Activated CD4-positive, alpha-beta T cell treated with anti-CD3 and anti-CD28 coated beads for 36 hours (primary cell): ENCODE measurements at regions of chr1 and their contacts with region 1.

Region 1: GRCh38 chr1:232248276-232248820 is 381.6 kb downstream of the SIPA1L2 start:
- DNase-seq: no peak
- ATAC-seq: no peak
- H3K4me3 Mint-ChIP-seq: no peak overlapping the region
- H3K27ac Mint-ChIP-seq: no peak overlapping the region
- H3K4me1 Mint-ChIP-seq: peaks cover 4% of the 10 kb centered on the region
- H3K27me3 Mint-ChIP-seq: peaks cover 34% of the 10 kb centered on the region

Region 2: DNA sequence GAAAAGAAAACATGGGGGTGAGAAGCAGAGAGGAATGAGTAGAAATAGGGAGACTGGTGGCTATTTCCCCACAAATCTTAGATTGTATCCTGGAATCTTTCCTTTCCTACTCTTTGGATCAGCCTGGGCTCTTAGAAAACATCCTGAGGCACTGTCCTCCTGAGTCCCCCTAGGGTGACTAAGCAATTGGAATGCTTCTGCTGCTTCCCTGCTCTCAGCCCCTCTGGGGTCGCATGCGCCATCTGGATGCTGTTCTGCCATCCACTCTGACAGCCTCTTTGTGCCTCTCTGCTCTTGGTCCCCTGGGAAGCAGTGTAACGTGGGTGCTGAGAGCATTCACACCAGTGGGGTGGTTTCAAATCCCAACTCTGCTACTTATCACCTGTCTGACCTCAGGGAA is 61.4 kb before region 1 on chr1:
- CTCF ChIA-PET with region 1: no interaction called
- POLR2A ChIA-PET with region 1: no interaction called
- intact Hi-C with region 1: loop called in 1 of 2 experiments (anchors 10 kb)
- DNase-seq: no peak
- ATAC-seq: no peak
- H3K4me3 Mint-ChIP-seq: no peak overlapping the region
- H3K27ac Mint-ChIP-seq: no peak overlapping the region
- H3K4me1 Mint-ChIP-seq: no peaks in the 10 kb centered on the region
- H3K27me3 Mint-ChIP-seq: peaks cover 2% of the 10 kb centered on the region

Region 3: GRCh38 chr1:232207073-232207866 is 41.1 kb before region 1 on chr1:
- CTCF ChIA-PET with region 1: no interaction called
- POLR2A ChIA-PET with region 1: no interaction called
- intact Hi-C with region 1: no loop called
- DNase-seq: no peak
- ATAC-seq: no peak
- H3K4me3 Mint-ChIP-seq: no peak overlapping the region
- H3K27ac Mint-ChIP-seq: no peak overlapping the region
- H3K4me1 Mint-ChIP-seq: no peaks in the 10 kb centered on the region
- H3K27me3 Mint-ChIP-seq: no peaks in the 10 kb centered on the region